Activated CD4-positive, alpha-beta memory T cell treated with anti-CD3 and anti-CD28 coated beads for 36 hours (primary cell): ENCODE measurements at regions of chr4 and their contacts with region 1.

Region 1: DNA sequence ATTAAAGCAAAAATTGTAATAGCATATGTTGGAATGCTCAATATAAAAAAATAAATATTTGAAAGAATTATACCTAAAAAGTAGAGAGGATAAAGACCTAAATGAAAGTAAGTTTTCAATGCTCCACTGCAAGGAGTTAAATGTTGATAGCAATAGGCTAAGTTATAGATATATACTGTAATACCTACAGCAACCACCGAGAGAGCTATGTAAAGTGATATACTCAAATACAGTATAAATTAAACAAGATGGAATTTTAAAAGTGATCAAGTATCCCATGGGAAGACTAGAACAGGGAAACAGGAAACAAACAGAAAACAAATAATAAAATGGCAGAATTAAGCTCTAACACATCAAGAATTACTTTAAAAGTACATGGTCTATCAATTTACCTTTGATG is 73.9 kb downstream of the CASP3 start:
- DNase-seq: no peak
- H3K4me3 Mint-ChIP-seq: no peak overlapping the region
- H3K27ac Mint-ChIP-seq: no peak overlapping the region
- H3K4me1 Mint-ChIP-seq: peaks cover 17% of the 10 kb centered on the region
- H3K27me3 Mint-ChIP-seq: no peaks in the 10 kb centered on the region

Region 2: DNA sequence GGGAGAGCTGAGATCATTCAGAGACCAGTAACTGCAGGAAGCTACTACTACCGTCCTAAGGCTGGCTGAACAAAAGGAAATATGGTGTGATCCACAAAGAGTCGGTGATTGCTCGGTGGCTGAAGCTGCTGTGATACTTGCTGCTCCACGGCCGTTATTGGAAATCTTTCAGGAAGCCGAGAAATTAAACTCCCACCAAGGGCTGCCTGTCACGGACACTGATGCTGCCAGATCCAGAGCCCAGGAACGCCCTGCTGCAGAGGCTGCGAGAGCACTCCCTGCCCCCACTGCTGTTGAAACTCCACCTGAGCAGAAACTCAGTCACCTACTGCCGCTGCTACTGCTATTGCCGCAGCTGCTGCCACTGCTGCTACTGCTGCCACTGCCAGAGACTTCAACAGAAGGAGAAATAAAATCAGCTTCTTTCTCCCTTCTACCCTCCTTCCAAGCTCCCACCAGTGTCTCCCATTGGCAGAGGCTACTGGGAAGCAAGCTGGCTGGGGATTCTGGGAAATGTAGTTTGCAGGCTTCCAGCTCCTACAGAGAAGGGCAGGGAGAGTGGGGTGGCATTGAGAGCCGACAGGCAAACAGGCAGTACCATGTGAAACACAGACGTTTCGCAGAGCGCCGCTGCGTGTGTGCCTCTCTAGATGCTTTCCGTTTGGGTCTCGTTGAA is 231.7 kb before region 1 on chr4:
- CTCF ChIA-PET with region 1: no interaction called
- POLR2A ChIA-PET with region 1: no interaction called
- intact Hi-C with region 1: no loop called
- DNase-seq: peak; percentile 54
- H3K4me3 Mint-ChIP-seq: peak overlapping the region; percentile 77
- H3K27ac Mint-ChIP-seq: no peak overlapping the region
- H3K4me1 Mint-ChIP-seq: peaks cover 23% of the 10 kb centered on the region
- H3K27me3 Mint-ChIP-seq: no peaks in the 10 kb centered on the region

Region 3: DNA sequence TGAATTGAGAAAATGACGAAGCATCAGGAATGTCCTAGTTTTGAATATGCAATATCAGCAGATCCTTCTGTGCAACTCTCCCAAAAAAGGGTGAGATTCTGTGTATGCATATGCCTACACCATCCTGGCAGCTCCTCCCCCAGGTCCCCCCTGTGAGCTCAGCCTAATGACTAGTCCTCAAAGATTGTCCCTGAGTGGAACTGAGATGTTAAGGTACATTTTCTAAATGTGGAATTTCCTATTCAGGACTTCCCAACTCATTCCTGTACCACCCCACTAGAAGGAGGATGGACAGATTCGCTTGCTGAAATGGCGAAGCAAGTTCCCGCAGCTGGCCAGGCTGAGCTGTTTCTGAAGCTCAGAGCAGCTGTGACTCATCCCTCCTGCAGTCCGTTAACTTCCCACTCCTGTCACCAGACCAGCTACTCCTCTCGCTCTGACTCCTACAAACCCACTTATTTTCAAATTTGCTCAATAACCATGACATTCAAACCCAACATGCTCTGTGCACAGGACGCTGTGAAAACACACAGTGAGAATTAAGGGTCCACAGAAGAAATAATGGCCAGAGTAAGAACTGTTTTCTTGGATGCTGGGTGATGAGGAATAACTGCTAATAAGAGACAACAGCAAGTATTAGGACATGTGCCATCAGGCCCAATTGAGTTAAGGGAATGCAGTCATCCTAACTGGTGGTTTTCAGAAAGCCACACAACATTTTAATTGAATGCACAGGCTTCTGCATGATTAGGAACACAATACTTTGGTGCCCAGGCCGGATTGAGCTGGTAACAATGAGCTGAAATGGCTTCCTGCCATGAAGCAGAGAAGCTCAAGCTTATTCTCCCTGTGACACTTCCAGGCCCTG is 61.0 kb before region 1 on chr4:
- CTCF ChIA-PET with region 1: no interaction called
- POLR2A ChIA-PET with region 1: no interaction called
- intact Hi-C with region 1: loop called (anchors 1 kb)
- DNase-seq: peak; percentile 90
- H3K4me3 Mint-ChIP-seq: peak overlapping the region; percentile 38
- H3K27ac Mint-ChIP-seq: peak overlapping the region; percentile 88
- H3K4me1 Mint-ChIP-seq: peaks cover 42% of the 10 kb centered on the region
- H3K27me3 Mint-ChIP-seq: no peaks in the 10 kb centered on the region

Region 4: GRCh38 chr4:184968784-184969201 is 393.5 kb after region 1 on chr4:
- CTCF ChIA-PET with region 1: no interaction called
- POLR2A ChIA-PET with region 1: no interaction called
- intact Hi-C with region 1: no loop called
- DNase-seq: no peak
- H3K4me3 Mint-ChIP-seq: no peak overlapping the region
- H3K27ac Mint-ChIP-seq: no peak overlapping the region
- H3K4me1 Mint-ChIP-seq: peaks cover 8% of the 10 kb centered on the region
- H3K27me3 Mint-ChIP-seq: peaks cover 13% of the 10 kb centered on the region